PC-9 (cell line): ENCODE measurements at regions of chr1 and their contacts with region 1.

Region 1: DNA sequence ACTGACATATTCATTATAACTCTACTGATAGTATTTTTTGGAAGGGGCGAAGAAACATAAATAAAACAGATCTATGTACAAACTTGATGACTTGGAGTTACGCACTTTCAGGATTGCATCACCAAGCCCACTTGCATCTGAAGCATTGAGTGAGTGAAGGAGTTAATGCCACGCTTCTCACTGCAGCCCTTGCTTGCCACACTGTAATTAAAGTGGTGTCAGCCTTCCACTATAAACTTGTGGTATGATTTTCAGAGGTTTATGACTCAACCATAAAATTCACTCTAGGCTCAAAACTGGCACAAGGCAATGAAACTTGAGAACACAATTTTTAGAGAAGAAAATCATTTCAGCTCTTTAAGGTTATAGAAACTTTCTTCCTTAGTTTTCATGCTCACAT is 93.9 kb upstream of the PRMT6 start:
- DNase-seq: no peak
- H3K4me3 ChIP-seq: no peak overlapping the region
- H3K27ac ChIP-seq: no peak overlapping the region
- H3K4me1 ChIP-seq: no peaks in the 10 kb centered on the region
- H3K27me3 ChIP-seq: no peaks in the 10 kb centered on the region
- CTCF ChIP-seq: no peak

Region 2: DNA sequence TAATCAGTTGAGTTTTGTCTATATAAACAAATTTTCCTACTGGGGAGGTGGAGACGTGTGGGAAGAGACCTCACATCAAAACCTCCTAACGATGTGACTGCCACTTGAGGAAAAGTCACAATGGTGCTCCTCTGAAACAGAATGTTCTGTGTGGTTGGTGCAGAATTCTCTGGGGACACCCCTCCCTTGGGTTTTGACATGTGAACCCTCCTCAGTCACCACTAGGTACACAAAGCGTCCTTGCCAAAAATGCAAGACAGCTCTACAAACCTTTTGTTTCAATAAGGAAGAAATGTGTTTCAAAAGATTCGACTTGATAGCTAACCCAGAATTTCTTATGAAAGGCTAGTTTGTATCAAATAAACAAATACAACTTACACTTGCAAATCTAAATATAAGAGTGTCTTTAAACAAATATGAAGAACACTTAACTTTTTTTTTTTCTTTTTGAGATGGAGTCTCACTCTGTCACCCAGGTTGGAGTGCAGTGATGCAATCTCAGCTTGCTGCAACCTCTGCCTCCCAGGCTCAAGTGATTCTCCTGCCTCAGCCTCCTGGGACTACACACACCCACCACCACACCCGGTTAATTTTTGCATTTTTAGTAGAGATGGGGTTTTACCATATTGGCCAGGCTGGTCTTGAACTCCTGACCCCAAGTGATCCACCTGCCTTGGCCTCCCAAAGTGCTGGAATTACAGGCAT is 1228.3 kb after region 1 on chr1:
- CTCF ChIA-PET with region 1: no interaction called
- POLR2A ChIA-PET with region 1: interaction called, 11 read pairs
- intact Hi-C with region 1: no loop called
- DNase-seq: no peak
- H3K4me3 ChIP-seq: no peak overlapping the region
- H3K27ac ChIP-seq: no peak overlapping the region
- H3K4me1 ChIP-seq: no peaks in the 10 kb centered on the region
- H3K27me3 ChIP-seq: no peaks in the 10 kb centered on the region
- CTCF ChIP-seq: no peak